Activated CD4-positive, alpha-beta memory T cell treated with anti-CD3 and anti-CD28 coated beads, Interleukin-2, amount 10 ng/mL, durations not matched to agents 7 days and 5 days (primary cell): ENCODE measurements at regions of chr9 and their contacts with region 1.

Region 1: DNA sequence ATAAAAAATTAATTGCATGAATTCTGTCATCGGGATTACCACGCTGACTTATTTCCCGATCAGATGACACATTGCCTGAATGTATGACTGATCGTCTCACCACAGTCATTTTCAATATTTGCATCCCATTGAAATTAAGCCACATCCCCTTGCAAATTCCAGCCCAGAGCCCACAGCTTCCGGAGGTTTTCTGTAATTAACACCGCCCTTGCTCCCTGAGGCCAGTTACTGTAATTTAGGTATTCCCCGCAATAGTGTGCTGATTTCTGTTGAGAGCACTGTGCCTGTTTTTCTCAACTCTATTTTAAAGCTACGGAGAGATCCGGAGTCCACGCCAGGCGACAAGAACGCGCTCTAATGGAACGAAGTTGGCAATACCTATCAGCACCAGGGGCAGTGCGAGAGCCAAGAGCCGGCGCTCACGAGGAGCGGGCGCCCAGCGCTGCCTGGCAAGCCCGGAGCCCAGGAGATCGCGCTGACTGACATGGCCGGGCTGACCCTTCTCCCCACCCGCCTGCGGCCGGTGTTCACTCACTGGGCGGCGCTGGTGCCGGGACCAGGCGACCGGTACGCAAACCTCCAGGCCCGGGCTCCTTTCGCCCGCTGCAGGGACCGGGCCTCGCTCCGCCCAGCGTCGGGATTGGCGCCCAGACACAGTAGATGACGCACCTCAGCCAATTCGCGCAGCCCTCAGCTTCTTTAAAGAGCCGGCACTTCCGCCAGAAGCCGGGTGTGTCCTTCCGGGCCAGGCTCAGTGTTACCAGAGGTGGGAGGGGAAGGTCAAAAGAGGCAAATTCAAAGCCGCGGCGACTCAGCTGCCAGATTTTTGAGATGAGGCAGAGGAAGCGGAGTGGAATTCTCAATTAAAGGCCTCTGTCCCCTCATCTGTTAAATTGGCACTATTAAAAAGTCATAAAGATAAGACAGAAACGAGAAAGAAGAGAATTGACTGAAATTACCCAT is at the start of gene PLGRKT:
- DNase-seq: peak; percentile 93
- H3K4me3 Mint-ChIP-seq: peak within 1 kb of the TSS; percentile 86
- H3K27ac Mint-ChIP-seq: peak within 1 kb of the TSS; percentile 92
- H3K4me1 Mint-ChIP-seq: peaks cover 49% of the 10 kb centered on the region
- H3K27me3 Mint-ChIP-seq: no peaks in the 10 kb centered on the region
- total RNA-seq, gene PLGRKT: 32.0 TPM

Region 2: GRCh38 chr9:4740638-4741364 is 696.7 kb before region 1 on chr9 and contains the start of gene AK3:
- CTCF ChIA-PET with region 1: no interaction called
- POLR2A ChIA-PET with region 1: interaction called, 19 read pairs
- DNase-seq: peak; percentile 88
- H3K4me3 Mint-ChIP-seq: peak within 1 kb of the TSS; percentile 92
- H3K27ac Mint-ChIP-seq: peak within 1 kb of the TSS; percentile 85
- H3K4me1 Mint-ChIP-seq: peaks cover 39% of the 10 kb centered on the region
- H3K27me3 Mint-ChIP-seq: no peaks in the 10 kb centered on the region
- total RNA-seq, gene AK3: 34.0 to 34.6 TPM

Region 3: GRCh38 chr9:4984621-4985385 is 452.7 kb before region 1 on chr9 and contains the start of gene JAK2:
- CTCF ChIA-PET with region 1: interaction called, 4 read pairs
- POLR2A ChIA-PET with region 1: interaction called, 11 read pairs
- DNase-seq: peak; percentile 88
- H3K4me3 Mint-ChIP-seq: peak within 1 kb of the TSS; percentile 87
- H3K27ac Mint-ChIP-seq: peak within 1 kb of the TSS; percentile 98
- H3K4me1 Mint-ChIP-seq: peaks cover 49% of the 10 kb centered on the region
- H3K27me3 Mint-ChIP-seq: no peaks in the 10 kb centered on the region
- total RNA-seq, gene JAK2: 27.2 to 30.0 TPM

Region 4: DNA sequence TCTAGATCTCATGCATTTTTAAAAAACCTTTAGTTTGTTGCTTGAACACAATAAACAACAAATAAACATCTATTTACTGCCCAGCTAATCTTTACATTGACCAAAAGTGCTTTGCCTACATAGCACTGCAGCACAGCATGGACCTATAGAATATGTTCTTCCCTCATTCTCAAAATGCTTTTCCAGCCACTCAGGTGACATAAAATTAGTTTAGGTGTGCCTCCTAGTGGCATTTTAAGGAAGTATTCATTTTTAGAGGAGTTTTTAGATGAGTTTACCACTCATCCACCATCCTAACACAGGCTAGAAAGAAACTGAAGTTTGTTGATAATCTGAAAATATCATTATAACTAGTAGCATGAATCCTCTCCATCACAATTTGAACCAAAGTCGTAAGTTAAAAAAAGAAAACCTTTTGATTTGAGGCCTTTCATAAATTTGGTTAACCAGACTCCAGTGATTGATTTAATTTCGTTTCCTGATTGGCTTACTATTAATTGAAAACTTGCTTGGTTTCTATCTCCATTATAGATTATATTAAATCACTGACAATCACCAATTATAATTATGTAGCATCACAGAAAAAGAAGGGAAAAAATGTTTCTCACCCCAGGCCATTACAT is 12.4 kb before region 1 on chr9:
- CTCF ChIA-PET with region 1: interaction called, 13 read pairs
- POLR2A ChIA-PET with region 1: no interaction called
- DNase-seq: no peak
- H3K4me3 Mint-ChIP-seq: no peak overlapping the region
- H3K27ac Mint-ChIP-seq: no peak overlapping the region
- H3K4me1 Mint-ChIP-seq: no peaks in the 10 kb centered on the region
- H3K27me3 Mint-ChIP-seq: no peaks in the 10 kb centered on the region

Region 5: DNA sequence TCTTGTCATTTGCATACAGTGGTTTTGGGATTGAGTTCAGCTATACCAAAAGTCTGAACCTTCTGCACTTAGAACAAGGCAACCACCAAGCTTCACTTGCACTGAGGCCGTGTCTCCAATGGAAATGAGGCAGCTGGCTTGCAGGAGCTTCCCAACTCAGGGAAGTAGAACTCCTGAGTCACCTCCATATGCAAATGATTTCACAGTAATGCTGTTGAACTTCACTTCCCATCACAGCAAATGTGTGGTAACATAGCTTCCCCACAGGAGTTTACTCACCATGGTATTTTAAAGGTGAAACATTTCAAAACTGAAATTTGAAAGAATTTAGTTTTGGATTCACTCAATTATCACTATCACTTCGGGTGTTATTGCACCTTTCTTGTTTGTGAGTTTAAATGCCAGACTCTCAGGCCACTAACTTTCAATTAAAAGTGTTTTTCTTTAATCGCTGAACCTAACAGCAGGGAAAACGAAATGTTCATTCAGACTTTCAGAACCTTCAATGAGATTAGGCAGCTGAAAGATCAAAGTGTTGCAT is 21.8 kb after region 1 on chr9:
- CTCF ChIA-PET with region 1: interaction called, 3 read pairs
- POLR2A ChIA-PET with region 1: interaction called, 29 read pairs
- DNase-seq: no peak
- H3K4me3 Mint-ChIP-seq: peak overlapping the region; percentile 31
- H3K27ac Mint-ChIP-seq: peak overlapping the region; percentile 78
- H3K4me1 Mint-ChIP-seq: peaks cover 53% of the 10 kb centered on the region
- H3K27me3 Mint-ChIP-seq: no peaks in the 10 kb centered on the region

Region 6: GRCh38 chr9:5557606-5558587 is 120.4 kb after region 1 on chr9:
- CTCF ChIA-PET with region 1: interaction called, 3 read pairs
- POLR2A ChIA-PET with region 1: interaction called, 16 read pairs
- DNase-seq: peak; percentile 77
- H3K4me3 Mint-ChIP-seq: peak overlapping the region; percentile 12
- H3K27ac Mint-ChIP-seq: peak overlapping the region; percentile 78
- H3K4me1 Mint-ChIP-seq: peaks cover 41% of the 10 kb centered on the region
- H3K27me3 Mint-ChIP-seq: no peaks in the 10 kb centered on the region

Region 7: GRCh38 chr9:5593904-5594303 is 156.4 kb after region 1 on chr9:
- CTCF ChIA-PET with region 1: interaction called, 40 read pairs
- POLR2A ChIA-PET with region 1: interaction called, 32 read pairs
- DNase-seq: no peak
- H3K4me3 Mint-ChIP-seq: no peak overlapping the region
- H3K27ac Mint-ChIP-seq: no peak overlapping the region
- H3K4me1 Mint-ChIP-seq: peaks cover 25% of the 10 kb centered on the region
- H3K27me3 Mint-ChIP-seq: peaks cover 5% of the 10 kb centered on the region